CD8-positive, alpha-beta memory T cell (primary cell): ENCODE measurements at regions of chr14 and their contacts with region 1.

Region 1: GRCh38 chr14:90383075-90383730 is 13.6 kb upstream of the CALM1 start:
- DNase-seq: peak; percentile 93 to 99 (median 97)
- H3K4me3 ChIP-seq: peak overlapping the region; percentile 88
- H3K4me3 Mint-ChIP-seq: no peak overlapping the region
- H3K27ac ChIP-seq: peak overlapping the region; percentile 99
- H3K27ac Mint-ChIP-seq: no peak overlapping the region
- H3K4me1 ChIP-seq: peaks cover 37% of the 10 kb centered on the region
- H3K4me1 Mint-ChIP-seq: peaks cover 5 to 28% (median 14%) of the 10 kb centered on the region in 3 donors
- H3K27me3 ChIP-seq: no peaks in the 10 kb centered on the region
- H3K27me3 Mint-ChIP-seq: no peaks in the 10 kb centered on the region

Region 2: DNA sequence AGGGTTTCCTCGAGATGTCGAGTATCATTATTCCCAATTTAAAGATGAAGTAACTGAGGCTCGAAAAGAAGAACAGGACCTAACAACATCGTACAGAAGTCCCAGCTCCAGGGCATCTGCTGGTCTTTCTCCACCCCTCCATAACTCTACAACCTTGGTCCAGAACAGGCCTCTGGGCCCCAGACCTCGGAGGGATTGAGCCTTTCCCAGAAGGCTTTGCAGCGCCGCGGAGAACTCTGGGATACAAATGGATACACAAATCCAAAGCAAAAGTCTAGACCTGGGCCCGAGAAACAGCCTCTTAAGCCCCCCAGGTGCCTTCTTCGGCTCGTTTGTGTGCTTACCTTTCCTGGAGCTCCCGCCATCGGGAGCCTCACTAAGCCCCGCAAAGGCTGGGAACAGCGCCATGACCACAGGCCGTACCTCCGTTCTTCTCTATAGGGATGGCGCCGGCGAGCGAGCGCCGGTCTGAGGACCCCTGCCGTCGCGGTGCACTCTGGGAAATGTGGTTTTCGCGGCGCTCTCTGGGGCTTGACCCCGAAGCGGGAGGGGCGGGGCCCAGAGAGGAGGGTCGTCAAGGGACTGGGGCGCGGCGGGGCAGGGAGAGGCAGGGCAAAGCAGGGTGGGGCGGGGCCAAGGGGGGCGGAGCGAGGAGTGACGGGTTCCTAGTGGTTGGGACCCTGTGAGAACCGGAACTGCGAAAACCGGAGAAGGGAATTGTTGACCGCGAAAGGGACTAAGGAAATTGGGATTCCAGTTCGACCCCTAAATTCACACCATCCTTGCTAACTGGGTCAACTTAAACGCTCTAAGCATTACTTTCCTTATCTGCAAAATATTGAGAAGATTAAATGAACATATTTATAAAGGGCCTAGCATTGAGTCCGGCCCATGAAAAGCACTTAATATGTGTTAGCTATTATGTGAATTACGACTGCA is 51.4 kb before region 1 on chr14 and contains the start of gene NRDE2:
- CTCF ChIA-PET with region 1: interaction called, 3 read pairs
- POLR2A ChIA-PET with region 1: interaction called, 14 read pairs
- DNase-seq: peak; percentile 85 to 94 (median 87)
- H3K4me3 ChIP-seq: peak within 1 kb of the TSS; percentile 64
- H3K4me3 Mint-ChIP-seq: peak within 1 kb of the TSS; percentile 89 to 97 (median 92)
- H3K27ac ChIP-seq: peak within 1 kb of the TSS; percentile 60
- H3K27ac Mint-ChIP-seq: peak within 1 kb of the TSS; percentile 86 to 99 (median 95)
- H3K4me1 ChIP-seq: peaks cover 14% of the 10 kb centered on the region
- H3K4me1 Mint-ChIP-seq: peaks cover 27 to 40% (median 35%) of the 10 kb centered on the region in 3 donors
- H3K27me3 ChIP-seq: no peaks in the 10 kb centered on the region
- H3K27me3 Mint-ChIP-seq: peaks cover 13 to 17% of the 10 kb centered on the region in 2 donors
- total RNA-seq, gene NRDE2: 25.8 to 28.7 TPM

Region 3: DNA sequence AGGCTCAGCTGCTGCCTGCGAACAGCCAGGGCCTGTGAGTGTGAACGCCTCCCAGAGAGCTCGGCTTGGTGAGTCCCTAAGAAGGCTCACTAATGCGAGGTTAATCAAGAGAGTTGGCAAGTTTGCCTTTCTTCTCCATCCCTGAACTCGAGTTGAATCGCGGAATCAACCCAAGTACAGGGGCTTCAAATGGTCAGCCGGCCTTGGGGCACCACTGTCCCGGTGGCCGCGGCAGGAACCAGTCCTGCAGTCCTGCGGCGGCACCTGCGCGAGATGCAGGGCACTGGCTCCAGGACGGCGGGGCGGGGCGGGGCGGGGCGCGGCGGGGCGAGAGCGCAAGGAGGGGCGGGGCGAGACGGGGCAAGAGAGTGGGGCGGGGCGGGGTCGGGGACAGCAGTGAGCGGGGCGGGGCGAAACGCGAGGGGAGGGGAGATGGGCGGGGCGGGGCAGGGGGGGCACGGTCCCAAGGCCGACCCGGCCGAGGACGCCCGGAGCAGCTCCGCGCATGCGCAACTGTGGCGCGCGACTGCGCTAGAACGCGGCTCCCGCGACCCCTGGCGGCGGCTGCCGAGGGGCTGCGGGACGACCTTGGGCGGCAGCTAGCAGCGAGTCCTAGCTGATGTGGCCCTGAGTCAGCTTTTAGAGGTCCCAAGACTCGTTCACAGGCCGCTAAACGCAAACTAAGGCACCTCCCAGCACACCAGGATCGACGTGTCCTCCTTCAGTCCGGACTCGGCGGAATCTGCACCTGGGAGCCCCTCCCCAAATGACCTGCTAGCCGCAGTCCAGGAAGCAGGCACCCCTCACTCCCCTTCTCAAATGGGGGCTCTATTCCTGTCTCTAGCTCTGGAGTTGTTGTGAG is 375.1 kb after region 1 on chr14:
- CTCF ChIA-PET with region 1: interaction called, 4 read pairs
- POLR2A ChIA-PET with region 1: interaction called, 10 read pairs
- DNase-seq: peak; percentile 92 to 96 (median 93)
- H3K4me3 ChIP-seq: peak overlapping the region; percentile 79
- H3K4me3 Mint-ChIP-seq: peak overlapping the region; percentile 76 to 91 (median 83)
- H3K27ac ChIP-seq: peak overlapping the region; percentile 43
- H3K27ac Mint-ChIP-seq: peak overlapping the region in 7 of 8 donors; percentile 68 to 91 (median 83)
- H3K4me1 ChIP-seq: peaks cover 16% of the 10 kb centered on the region
- H3K4me1 Mint-ChIP-seq: peaks cover 5 to 17% (median 12%) of the 10 kb centered on the region in 3 donors
- H3K27me3 ChIP-seq: no peaks in the 10 kb centered on the region
- H3K27me3 Mint-ChIP-seq: peaks cover 5 to 21% of the 10 kb centered on the region in 2 donors